ENCODE measurements at regions of chr12 and their contacts with region 1.

Region 1: GRCh38 chr12:101343893-101344292 is 63.7 kb downstream of the ARL1 start:
- DNase-seq: no peak
- ATAC-seq: no peak
- H3K4me3 ChIP-seq: no peak overlapping the region
- H3K27ac ChIP-seq: no peak overlapping the region
- H3K4me1 ChIP-seq: no peaks in the 10 kb centered on the region
- H3K27me3 ChIP-seq: no peaks in the 10 kb centered on the region
- CTCF ChIP-seq: no peak
- POLR2A ChIP-seq: no peak
- RAD21 ChIP-seq: no peak

Region 2: DNA sequence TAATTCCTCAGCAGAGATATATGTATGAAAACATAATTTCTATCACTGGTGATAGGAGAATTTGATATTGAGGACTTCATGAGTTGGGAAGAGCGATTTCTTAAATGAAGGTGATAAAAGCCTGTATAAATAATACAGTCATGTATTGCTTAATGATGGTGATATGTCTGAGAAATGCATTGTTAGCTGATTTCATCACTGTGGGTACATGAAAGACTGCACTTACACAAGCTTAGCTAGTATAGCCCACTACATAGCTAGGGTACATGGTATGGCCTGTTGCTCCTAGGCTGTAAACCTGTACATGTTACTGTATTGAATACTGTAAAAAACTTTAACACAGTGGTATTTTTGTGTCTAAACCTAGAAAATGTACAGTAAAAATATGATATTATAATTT is 485.9 kb before region 1 on chr12:
- CTCF ChIA-PET with region 1: no interaction called
- POLR2A ChIA-PET with region 1: interaction called, 10 read pairs
- dilution Hi-C with region 1: no loop called
- in situ Hi-C with region 1: no loop called
- intact Hi-C with region 1: no loop called
- DNase-seq: peak; percentile 12
- ATAC-seq: no peak
- H3K4me3 ChIP-seq: no peak overlapping the region
- H3K27ac ChIP-seq: no peak overlapping the region
- H3K4me1 ChIP-seq: peaks cover 2% of the 10 kb centered on the region; the same call in 1 of the 2 replicates
- H3K27me3 ChIP-seq: no peaks in the 10 kb centered on the region
- CTCF ChIP-seq: no peak
- POLR2A ChIP-seq: no peak
- RAD21 ChIP-seq: no peak

Region 3: GRCh38 chr12:101051901-101052550 is 291.9 kb before region 1 on chr12:
- CTCF ChIA-PET with region 1: no interaction called
- POLR2A ChIA-PET with region 1: no interaction called
- dilution Hi-C with region 1: no loop called
- in situ Hi-C with region 1: no loop called
- intact Hi-C with region 1: no loop called
- DNase-seq: peak; percentile 81
- ATAC-seq: peak; percentile 93
- H3K4me3 ChIP-seq: no peak overlapping the region
- H3K27ac ChIP-seq: peak overlapping the region; percentile 48; the same call in 1 of the 2 replicates
- H3K4me1 ChIP-seq: peaks cover 4% of the 10 kb centered on the region
- H3K27me3 ChIP-seq: no peaks in the 10 kb centered on the region
- CTCF ChIP-seq: no peak
- POLR2A ChIP-seq: no peak
- RAD21 ChIP-seq: no peak